Dendritic cell treated with granulocyte-macrophage colony-stimulating factor and Interleukin-4, amounts not matched to agents 40 ng/mL and 50 ng/mL, for 4 days (primary cell): ENCODE measurements at regions of chr20 and their contacts with region 1.

Region 1: GRCh38 chr20:18632196-18633009 is 44.5 kb downstream of the DTD1 start:
- H3K4me3 Mint-ChIP-seq: no peak overlapping the region
- H3K27ac Mint-ChIP-seq: no peak overlapping the region
- H3K4me1 Mint-ChIP-seq: no peaks in the 10 kb centered on the region
- H3K27me3 Mint-ChIP-seq: no peaks in the 10 kb centered on the region

Region 2: GRCh38 chr20:18657575-18657974 is 25.2 kb after region 1 on chr20:
- intact Hi-C with region 1: no loop called
- H3K4me3 Mint-ChIP-seq: no peak overlapping the region
- H3K27ac Mint-ChIP-seq: no peak overlapping the region
- H3K4me1 Mint-ChIP-seq: no peaks in the 10 kb centered on the region
- H3K27me3 Mint-ChIP-seq: no peaks in the 10 kb centered on the region

Region 3: GRCh38 chr20:19205977-19206396 is 573.6 kb after region 1 on chr20:
- intact Hi-C with region 1: loop called (anchors 10 kb)
- H3K4me3 Mint-ChIP-seq: no peak overlapping the region
- H3K27ac Mint-ChIP-seq: no peak overlapping the region
- H3K4me1 Mint-ChIP-seq: no peaks in the 10 kb centered on the region
- H3K27me3 Mint-ChIP-seq: peaks cover 18% of the 10 kb centered on the region

Region 4: GRCh38 chr20:19583532-19584175 is 951.3 kb after region 1 on chr20:
- intact Hi-C with region 1: loop called (anchors 5 kb)
- H3K4me3 Mint-ChIP-seq: no peak overlapping the region
- H3K27ac Mint-ChIP-seq: no peak overlapping the region
- H3K4me1 Mint-ChIP-seq: no peaks in the 10 kb centered on the region
- H3K27me3 Mint-ChIP-seq: no peaks in the 10 kb centered on the region

Region 5: GRCh38 chr20:19661717-19662636 is 1029.6 kb after region 1 on chr20:
- intact Hi-C with region 1: loop called (anchors 5 kb)
- H3K4me3 Mint-ChIP-seq: no peak overlapping the region
- H3K27ac Mint-ChIP-seq: no peak overlapping the region
- H3K4me1 Mint-ChIP-seq: peaks cover 44% of the 10 kb centered on the region
- H3K27me3 Mint-ChIP-seq: peaks cover 31% of the 10 kb centered on the region